Activated CD8-positive, alpha-beta T cell treated with anti-CD3 and anti-CD28 coated beads for 36 hours (primary cell): ENCODE measurements at regions of chr16 and their contacts with region 1.

Region 1: DNA sequence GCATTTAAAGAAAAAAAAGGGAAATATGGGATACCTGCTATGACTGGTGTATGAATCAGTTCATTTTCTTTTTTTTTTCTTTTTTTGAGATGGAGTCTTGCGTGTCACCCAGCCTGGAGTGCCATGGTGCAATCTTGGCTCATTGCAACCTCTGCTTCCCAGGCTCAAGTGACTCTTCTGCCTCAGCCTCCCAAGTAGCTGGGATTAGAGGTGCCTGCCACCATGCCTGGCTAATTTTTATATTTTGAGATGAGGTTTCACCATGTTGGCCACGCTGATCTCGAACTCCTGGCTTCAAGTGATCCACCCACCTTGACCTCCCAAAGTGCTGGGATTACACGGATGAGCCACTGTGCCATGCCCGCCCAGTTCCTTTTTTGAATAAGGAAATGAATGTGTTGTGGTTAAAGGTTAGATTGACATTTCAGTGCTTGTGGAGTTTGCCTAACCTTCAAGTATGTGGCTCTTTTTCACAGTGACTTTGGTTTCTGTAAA is 7.7 kb downstream of the HAPSTR1 start:
- DNase-seq: peak; percentile 55
- ATAC-seq: peak; percentile 47
- H3K4me3 Mint-ChIP-seq: peak overlapping the region; percentile 58
- H3K27ac Mint-ChIP-seq: peak overlapping the region; percentile 89
- H3K4me1 Mint-ChIP-seq: peaks cover 88% of the 10 kb centered on the region
- H3K27me3 Mint-ChIP-seq: no peaks in the 10 kb centered on the region
- CTCF ChIP-seq: no peak

Region 2: DNA sequence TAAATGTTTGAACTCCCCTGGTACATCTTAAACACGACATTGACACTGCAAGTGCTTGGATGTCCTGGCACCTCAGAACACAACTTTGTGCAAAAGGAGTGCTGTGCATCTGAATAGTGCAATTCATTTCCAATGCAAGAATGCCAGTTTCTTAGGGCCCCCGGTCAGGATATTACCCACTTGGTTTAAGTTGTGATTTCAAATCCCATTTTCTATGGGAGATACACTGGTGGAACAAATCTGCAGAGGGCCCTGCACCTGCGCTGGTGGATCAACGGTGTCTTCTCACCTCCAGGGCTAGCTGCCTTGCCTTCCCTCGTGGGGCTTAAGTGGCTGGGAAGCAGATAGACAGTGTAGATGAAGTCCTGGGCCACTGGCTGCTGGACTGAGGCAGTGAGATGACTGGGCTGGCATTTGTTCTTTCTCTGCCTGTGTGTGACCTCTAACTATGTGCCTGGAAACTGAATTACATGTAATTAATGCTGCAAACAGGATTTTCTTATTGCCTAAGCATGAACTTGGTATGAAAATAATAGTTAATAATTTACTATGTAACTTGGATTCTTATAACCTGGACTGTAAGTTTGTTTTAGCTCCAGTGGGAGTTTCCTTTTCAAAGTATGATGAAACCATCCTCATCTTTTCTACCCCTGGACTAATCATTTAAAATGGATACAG is 13.1 kb after region 1 on chr16:
- CTCF ChIA-PET with region 1: interaction called, 6 read pairs
- POLR2A ChIA-PET with region 1: interaction called, 69 read pairs
- intact Hi-C with region 1: no loop called
- DNase-seq: no peak
- ATAC-seq: peak; percentile 25
- H3K4me3 Mint-ChIP-seq: no peak overlapping the region
- H3K27ac Mint-ChIP-seq: peak overlapping the region; percentile 88
- H3K4me1 Mint-ChIP-seq: peaks cover 91% of the 10 kb centered on the region
- H3K27me3 Mint-ChIP-seq: no peaks in the 10 kb centered on the region
- CTCF ChIP-seq: no peak